Endothelial cell of umbilical vein (primary cell): ENCODE measurements at regions of chr1 and their contacts with region 1.

Region 1: DNA sequence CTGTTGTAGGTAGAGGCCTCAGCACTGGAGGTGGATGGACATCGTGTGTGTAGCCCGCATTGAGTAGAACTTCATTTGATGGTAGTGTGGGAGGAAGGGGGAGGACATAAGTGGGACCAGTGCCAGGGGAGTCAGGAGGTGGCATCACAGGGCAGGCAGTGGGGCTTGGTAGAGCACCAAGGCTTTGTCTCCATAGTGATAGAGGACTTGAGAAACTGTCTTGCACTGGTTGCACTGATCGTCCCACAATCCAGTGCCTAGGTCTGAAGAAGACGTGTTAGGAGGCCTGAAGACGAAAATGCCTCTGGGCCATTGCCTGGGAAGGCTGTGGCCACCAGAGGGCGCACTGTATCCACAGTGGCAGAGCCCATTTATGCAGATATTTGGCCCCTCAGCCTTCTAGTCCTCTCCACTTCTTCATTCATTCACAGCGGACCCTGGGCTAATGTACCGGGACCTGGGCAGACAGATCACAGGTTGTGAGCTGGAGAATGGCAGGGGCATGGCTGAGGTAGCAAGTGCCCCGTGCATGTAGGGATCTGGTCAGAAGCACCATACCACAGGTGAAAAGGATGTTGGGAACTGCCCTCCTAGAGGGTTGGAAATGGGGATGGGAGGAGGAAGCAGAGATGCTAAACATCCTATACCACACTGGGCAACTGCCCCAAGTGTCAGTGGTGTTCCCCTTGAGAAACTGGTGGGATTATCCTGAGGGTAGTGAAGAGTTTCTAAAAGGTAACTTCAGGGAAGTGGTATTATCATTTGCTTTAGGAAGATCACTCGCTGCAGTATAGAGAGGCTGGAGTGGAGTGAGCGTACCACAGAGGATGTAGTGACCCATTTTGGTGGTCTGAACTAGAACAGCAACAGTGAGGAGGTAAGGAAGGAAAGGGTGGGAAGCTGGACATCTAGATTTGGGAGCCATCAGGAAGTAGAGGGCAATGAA is 95.3 kb downstream of the PIK3R3 start:
- DNase-seq: peak; percentile 84
- H3K4me3 ChIP-seq: no peak overlapping the region
- H3K27ac ChIP-seq: no peak overlapping the region
- H3K4me1 ChIP-seq: peaks cover 4% of the 10 kb centered on the region
- H3K27me3 ChIP-seq: no peaks in the 10 kb centered on the region
- CTCF ChIP-seq: peak; percentile 96 to 97
- POLR2A ChIP-seq: no peak

Region 2: DNA sequence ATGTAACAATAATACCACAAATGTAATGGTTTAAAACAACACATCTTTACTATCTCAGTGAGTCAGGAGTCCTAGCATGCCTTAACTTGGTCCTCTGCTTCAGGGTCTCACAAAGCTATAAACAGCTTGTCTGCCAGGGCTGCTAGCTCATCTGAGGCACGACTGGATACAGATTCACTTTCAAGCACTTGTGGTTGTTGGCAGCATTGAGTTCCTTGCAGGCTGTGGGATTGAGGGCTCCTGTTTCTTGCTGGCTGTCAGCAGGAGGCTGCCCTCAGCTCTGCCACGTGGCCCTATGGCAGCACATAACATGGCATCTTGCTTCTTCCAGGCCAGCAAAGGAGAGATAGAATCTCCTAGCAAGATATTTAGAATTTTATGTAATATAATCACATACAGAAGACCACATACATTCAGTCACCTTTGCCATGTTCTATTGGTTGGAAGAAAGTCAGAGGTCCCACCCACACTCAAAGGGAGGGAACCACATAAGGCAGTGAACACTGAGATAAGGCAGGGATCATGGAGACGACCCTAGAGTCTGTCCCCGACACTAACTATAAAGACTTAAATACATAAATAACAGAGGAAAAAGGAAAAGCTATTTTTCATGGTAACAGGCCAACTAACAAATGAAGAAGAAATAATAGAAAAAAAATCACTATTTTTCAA is 267.8 kb before region 1 on chr1:
- CTCF ChIA-PET with region 1: no interaction called
- POLR2A ChIA-PET with region 1: no interaction called
- dilution Hi-C with region 1: no loop called
- intact Hi-C with region 1: no loop called
- DNase-seq: no peak
- H3K4me3 ChIP-seq: no peak overlapping the region
- H3K27ac ChIP-seq: no peak overlapping the region
- H3K4me1 ChIP-seq: peaks cover 3% of the 10 kb centered on the region
- H3K27me3 ChIP-seq: no peaks in the 10 kb centered on the region
- CTCF ChIP-seq: no peak
- POLR2A ChIP-seq: no peak

Region 3: GRCh38 chr1:46197964-46198811 is 161.0 kb after region 1 on chr1 and contains the start of gene POMGNT1:
- CTCF ChIA-PET with region 1: no interaction called
- POLR2A ChIA-PET with region 1: no interaction called
- dilution Hi-C with region 1: loop called (anchors 25 kb)
- intact Hi-C with region 1: loop called (anchors 1 kb)
- DNase-seq: peak; percentile 63
- H3K4me3 ChIP-seq: peak within 1 kb of the TSS; percentile 26 to 88 (median 64)
- H3K27ac ChIP-seq: peak within 1 kb of the TSS; percentile 39
- H3K4me1 ChIP-seq: peaks cover 8% of the 10 kb centered on the region
- H3K27me3 ChIP-seq: no peaks in the 10 kb centered on the region
- CTCF ChIP-seq: peak in 1 of 2 donors; percentile 19
- POLR2A ChIP-seq: peak; percentile 88
- total RNA-seq, gene POMGNT1: 64.4 and 66.9 TPM in 2 replicates